ENCODE measurements at regions of chr4 and their contacts with region 1.

Region 1: DNA sequence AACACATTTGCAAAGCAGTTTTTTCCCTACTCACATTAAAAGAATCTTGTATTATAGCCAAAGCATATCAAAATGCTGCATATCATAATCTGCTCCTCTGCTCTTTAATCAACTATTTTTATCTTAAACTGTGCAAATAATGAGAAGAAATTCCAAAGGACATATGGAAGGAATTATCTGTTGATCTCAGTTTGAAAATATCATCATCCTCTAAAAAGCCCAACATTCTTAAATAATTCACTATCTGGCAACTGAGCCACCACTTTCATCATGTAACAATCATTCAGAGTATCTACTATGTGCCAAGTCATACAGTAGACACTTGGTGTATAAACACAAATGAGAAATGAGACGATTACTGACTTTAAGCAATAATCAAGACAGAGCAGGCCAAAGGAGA is 63.0 kb downstream of the PRSS12 start:
- DNase-seq: no peak
- H3K4me3 ChIP-seq: no peak overlapping the region
- H3K27ac ChIP-seq: no peak overlapping the region
- H3K4me1 ChIP-seq: no peaks in the 10 kb centered on the region
- H3K27me3 ChIP-seq: no peaks in the 10 kb centered on the region
- CTCF ChIP-seq: no peak
- POLR2A ChIP-seq: no peak

Region 2: DNA sequence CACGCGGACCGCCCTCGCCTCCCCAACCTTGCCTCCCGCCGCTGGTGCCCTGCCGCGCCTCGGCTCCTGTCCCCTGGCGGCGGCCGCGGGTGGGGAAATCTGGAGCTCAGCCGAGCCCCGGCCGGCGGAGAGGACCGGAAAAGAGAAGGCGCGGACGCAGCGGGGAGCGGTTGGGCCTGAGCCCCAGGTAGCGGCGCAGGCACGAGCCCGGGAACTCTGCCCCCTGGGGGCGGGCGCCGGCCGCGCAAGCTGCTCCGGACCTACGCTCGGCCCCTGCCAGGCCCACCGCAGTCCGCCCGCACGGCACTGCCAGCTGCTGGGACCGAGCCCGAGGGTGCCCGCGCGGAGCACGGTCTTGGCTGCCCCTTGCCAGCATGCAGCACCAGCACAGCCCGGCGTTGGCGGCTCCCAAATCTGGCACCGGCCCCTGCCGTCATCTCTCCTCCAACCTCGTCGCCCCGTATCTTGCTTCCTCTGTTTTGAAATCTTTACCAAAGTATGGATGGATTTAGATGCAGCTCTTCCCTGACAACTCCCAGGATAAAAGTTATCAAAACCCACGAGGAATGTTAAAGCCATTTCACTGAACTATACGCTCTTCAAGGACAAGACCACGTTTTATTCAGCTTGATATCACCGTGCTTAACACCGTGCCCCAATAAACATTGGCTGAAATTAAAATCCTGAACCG is 63.2 kb after region 1 on chr4 and contains the start of gene PRSS12:
- intact Hi-C with region 1: loop called in 1 of 2 experiments (anchors 5 kb)
- DNase-seq: peak; percentile 37 to 60 (median 55)
- H3K4me3 ChIP-seq: peak within 1 kb of the TSS in 1 of 4 donors; percentile 50
- H3K27ac ChIP-seq: no peak within 1 kb of the TSS
- H3K4me1 ChIP-seq: peaks cover 0 to 11% of the 10 kb centered on the region in 2 donors
- H3K27me3 ChIP-seq: peaks cover 46% of the 10 kb centered on the region
- CTCF ChIP-seq: peak; percentile 23 to 67 (median 42)
- POLR2A ChIP-seq: no peak
- total RNA-seq, gene PRSS12: 0.14 to 0.89 (median 0.44) TPM in 7 of 9 donors, not detected in the others

Region 3: DNA sequence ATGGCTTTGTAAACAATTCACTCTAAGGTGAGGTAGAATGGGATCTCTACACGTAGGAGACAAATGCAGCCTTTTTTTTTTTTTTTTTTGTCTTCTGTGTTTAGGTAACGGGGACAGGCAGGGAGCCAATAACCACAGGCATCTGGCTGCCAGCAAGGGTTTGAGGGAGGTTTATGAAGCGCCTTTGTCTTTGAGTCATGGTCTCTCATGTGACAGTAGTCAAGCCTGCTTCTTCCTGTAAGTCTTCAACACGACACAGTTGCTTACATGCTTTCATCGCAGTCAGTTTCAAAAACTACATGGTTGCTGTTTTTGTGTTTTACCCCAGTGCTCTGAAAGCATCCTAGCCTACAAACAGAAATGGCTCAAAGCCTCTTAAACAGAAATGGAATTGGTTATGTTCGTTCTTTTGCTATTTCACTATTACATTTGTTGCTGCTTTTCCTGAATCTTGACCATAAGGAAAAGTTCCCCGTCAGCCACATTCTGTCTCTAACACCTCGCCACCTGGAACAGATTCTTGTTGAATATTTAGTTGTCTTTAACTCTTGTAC is 267.6 kb after region 1 on chr4:
- intact Hi-C with region 1: no loop called
- DNase-seq: no peak
- H3K4me3 ChIP-seq: no peak overlapping the region
- H3K27ac ChIP-seq: no peak overlapping the region
- H3K4me1 ChIP-seq: no peaks in the 10 kb centered on the region
- H3K27me3 ChIP-seq: no peaks in the 10 kb centered on the region
- CTCF ChIP-seq: no peak
- POLR2A ChIP-seq: no peak